ENCODE measurements at regions of chr6 and their contacts with region 1.

Region 1: DNA sequence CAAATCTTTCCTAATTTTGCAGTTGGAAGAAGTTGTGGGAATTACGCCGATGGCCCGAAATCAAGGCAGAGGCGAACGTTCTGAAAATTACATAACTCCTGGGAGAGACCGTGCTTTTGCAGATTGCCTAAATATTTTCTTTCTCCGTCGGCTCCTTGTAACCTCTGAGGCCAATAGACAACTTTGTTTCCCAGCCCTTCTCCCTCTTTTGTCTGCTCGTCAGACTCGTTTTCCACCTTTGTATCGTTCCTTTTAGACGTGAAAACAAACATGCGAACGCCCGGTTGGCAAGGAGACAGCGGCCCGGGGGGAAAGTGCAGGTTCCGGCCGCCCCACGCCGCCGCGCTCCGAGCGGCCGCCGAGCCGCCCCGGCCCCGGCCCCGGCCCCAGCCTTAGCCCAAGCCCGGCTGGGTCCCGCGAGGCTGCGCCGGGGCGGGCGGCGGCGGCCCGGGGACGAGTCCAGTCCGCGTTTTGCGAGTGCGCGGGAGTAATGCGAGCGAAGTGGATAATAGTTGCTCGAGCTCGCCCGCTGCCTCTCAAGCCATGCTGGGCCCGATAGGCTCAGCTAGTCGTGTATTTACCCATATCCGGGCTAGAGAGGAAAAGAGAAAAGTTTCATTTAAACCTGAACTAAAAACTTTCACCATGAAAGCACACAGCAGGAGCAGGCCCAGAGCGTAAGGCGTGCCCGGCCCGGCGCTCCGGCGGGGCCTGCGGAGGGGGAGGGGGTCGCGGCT is at the start of gene ARID1B:
- DNase-seq: peak; percentile 69 to 92 (median 76)
- ATAC-seq: peak; percentile 55
- H3K4me3 ChIP-seq: peak within 1 kb of the TSS; percentile 89
- H3K4me3 Mint-ChIP-seq: peak within 1 kb of the TSS; percentile 95
- H3K27ac ChIP-seq: peak within 1 kb of the TSS; percentile 83 to 90
- H3K27ac Mint-ChIP-seq: peak within 1 kb of the TSS; percentile 97
- H3K4me1 ChIP-seq: peaks cover 12% of the 10 kb centered on the region
- H3K4me1 Mint-ChIP-seq: peaks cover 46% of the 10 kb centered on the region
- H3K27me3 ChIP-seq: no peaks in the 10 kb centered on the region
- H3K27me3 Mint-ChIP-seq: no peaks in the 10 kb centered on the region
- CTCF ChIP-seq: no peak
- total RNA-seq, gene ARID1B: 120 to 125 TPM

Region 2: DNA sequence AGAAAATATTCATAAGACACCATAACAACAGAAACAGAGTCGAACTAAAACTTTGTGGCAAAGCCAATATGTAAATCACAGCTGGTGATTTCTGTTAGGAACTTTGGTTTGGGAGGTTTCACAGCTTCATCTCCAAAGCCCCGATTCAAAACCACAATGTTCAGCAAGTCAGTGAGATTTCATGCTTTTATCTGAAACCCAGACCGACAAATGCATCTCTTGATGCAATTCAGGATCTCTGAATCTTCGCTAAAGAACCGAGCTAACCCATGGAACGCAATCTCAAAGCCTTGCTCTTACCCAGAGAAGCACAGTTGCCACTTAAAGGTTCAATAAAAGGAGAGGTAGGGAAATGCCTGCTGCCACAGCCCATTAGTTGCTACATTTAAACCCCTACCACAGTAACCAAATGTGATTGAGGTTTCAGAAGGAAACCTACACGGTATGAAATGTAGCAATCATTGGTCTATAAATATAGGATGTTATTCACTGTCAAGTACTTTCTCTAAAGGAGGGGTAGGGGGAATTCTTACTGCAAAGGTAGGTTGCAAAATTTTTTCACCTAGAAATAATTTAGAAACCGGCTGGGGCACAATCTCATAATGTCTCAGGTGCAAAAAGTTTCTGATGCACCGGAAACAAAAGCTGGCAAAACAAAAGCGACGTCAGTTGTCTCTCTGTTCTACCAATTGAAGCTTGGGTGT is 380.8 kb before region 1 on chr6:
- CTCF ChIA-PET with region 1: no interaction called
- POLR2A ChIA-PET with region 1: interaction called, 52 read pairs
- intact Hi-C with region 1: loop called (anchors 2 to 10 kb)
- DNase-seq: peak in 11 of 14 experiments; percentile 1 to 80 (median 19)
- ATAC-seq: peak; percentile 72
- H3K4me3 ChIP-seq: peak overlapping the region; percentile 37
- H3K4me3 Mint-ChIP-seq: peak overlapping the region; percentile 78
- H3K27ac ChIP-seq: peak overlapping the region; percentile 78 to 91
- H3K27ac Mint-ChIP-seq: peak overlapping the region; percentile 97
- H3K4me1 ChIP-seq: peaks cover 54% of the 10 kb centered on the region
- H3K4me1 Mint-ChIP-seq: peaks cover 97% of the 10 kb centered on the region
- H3K27me3 ChIP-seq: no peaks in the 10 kb centered on the region
- H3K27me3 Mint-ChIP-seq: no peaks in the 10 kb centered on the region
- CTCF ChIP-seq: no peak

Region 3: DNA sequence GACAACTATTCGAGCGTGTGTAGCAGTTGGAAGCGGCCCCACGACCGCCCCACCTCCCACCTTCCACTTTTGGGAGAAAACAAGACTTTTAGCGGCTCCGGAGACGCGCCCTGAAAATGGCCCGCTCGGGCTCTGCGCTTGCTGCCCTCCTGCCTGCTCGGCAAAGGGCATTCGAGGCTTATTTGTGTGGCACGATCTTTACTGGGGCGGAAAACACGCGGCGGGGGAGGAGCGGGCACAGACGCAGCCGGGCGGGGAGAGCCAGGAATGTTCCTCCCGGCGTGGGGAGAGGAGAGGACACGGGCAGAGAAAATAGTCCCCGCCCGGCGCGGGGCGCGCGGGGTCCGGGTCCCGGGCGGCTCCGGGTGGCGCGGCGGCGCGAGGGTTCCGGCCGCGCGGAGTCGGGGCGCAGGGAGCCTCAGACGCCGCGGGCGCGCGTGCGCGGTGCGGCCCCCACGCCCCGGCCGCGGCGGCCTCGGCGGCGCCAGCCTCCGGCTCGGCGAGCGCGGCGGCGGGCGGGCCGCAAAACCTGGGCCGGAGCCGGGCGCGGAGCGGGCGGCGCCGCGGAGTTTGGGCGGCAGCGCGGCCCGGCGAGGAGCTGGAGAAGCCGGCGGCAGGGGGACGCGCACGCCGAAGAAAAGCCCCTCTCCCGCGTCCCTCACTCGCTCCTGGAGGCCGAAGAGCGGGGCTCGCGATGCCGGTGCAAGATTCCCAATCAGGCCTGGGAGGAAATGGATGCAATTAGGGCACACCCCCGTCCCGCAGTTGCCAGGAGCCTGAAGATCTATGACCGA is 89.8 kb before region 1 on chr6:
- CTCF ChIA-PET with region 1: interaction called, 6 read pairs
- POLR2A ChIA-PET with region 1: interaction called, 141 read pairs
- intact Hi-C with region 1: loop called (anchors 1 kb)
- DNase-seq: peak; percentile 53 to 94 (median 76)
- ATAC-seq: peak; percentile 76
- H3K4me3 ChIP-seq: peak overlapping the region; percentile 82
- H3K4me3 Mint-ChIP-seq: peak overlapping the region; percentile 92
- H3K27ac ChIP-seq: peak overlapping the region; percentile 91 to 97
- H3K27ac Mint-ChIP-seq: peak overlapping the region; percentile 92
- H3K4me1 ChIP-seq: peaks cover 14% of the 10 kb centered on the region
- H3K4me1 Mint-ChIP-seq: peaks cover 24% of the 10 kb centered on the region
- H3K27me3 ChIP-seq: no peaks in the 10 kb centered on the region
- H3K27me3 Mint-ChIP-seq: no peaks in the 10 kb centered on the region
- CTCF ChIP-seq: no peak

Region 4: GRCh38 chr6:156698239-156699016 is 78.6 kb before region 1 on chr6:
- CTCF ChIA-PET with region 1: no interaction called
- POLR2A ChIA-PET with region 1: no interaction called
- intact Hi-C with region 1: no loop called
- DNase-seq: no peak
- ATAC-seq: no peak
- H3K4me3 ChIP-seq: no peak overlapping the region
- H3K4me3 Mint-ChIP-seq: no peak overlapping the region
- H3K27ac ChIP-seq: no peak overlapping the region
- H3K27ac Mint-ChIP-seq: no peak overlapping the region
- H3K4me1 ChIP-seq: no peaks in the 10 kb centered on the region
- H3K4me1 Mint-ChIP-seq: no peaks in the 10 kb centered on the region
- H3K27me3 ChIP-seq: no peaks in the 10 kb centered on the region
- H3K27me3 Mint-ChIP-seq: no peaks in the 10 kb centered on the region
- CTCF ChIP-seq: no peak

Region 5: GRCh38 chr6:156729248-156729647 is 47.8 kb before region 1 on chr6:
- CTCF ChIA-PET with region 1: no interaction called
- POLR2A ChIA-PET with region 1: interaction called, 4 read pairs
- intact Hi-C with region 1: loop called in 1 of 2 experiments (anchors 5 kb)
- DNase-seq: no peak
- ATAC-seq: no peak
- H3K4me3 ChIP-seq: no peak overlapping the region
- H3K4me3 Mint-ChIP-seq: no peak overlapping the region
- H3K27ac ChIP-seq: no peak overlapping the region
- H3K27ac Mint-ChIP-seq: no peak overlapping the region
- H3K4me1 ChIP-seq: no peaks in the 10 kb centered on the region
- H3K4me1 Mint-ChIP-seq: no peaks in the 10 kb centered on the region
- H3K27me3 ChIP-seq: no peaks in the 10 kb centered on the region
- H3K27me3 Mint-ChIP-seq: no peaks in the 10 kb centered on the region
- CTCF ChIP-seq: no peak

Region 6: GRCh38 chr6:156816505-156816904 is 39.5 kb after region 1 on chr6:
- CTCF ChIA-PET with region 1: no interaction called
- POLR2A ChIA-PET with region 1: no interaction called
- intact Hi-C with region 1: loop called in 1 of 2 experiments (anchors 5 kb)
- DNase-seq: no peak
- ATAC-seq: no peak
- H3K4me3 ChIP-seq: no peak overlapping the region
- H3K4me3 Mint-ChIP-seq: peak overlapping the region; percentile 16
- H3K27ac ChIP-seq: no peak overlapping the region
- H3K27ac Mint-ChIP-seq: no peak overlapping the region
- H3K4me1 ChIP-seq: peaks cover 35% of the 10 kb centered on the region
- H3K4me1 Mint-ChIP-seq: peaks cover 88% of the 10 kb centered on the region
- H3K27me3 ChIP-seq: no peaks in the 10 kb centered on the region
- H3K27me3 Mint-ChIP-seq: no peaks in the 10 kb centered on the region
- CTCF ChIP-seq: no peak

Region 7: GRCh38 chr6:156953479-156954146 is 176.6 kb after region 1 on chr6:
- CTCF ChIA-PET with region 1: no interaction called
- POLR2A ChIA-PET with region 1: interaction called, 5 read pairs
- intact Hi-C with region 1: loop called in 1 of 2 experiments (anchors 2 kb)
- DNase-seq: peak in 10 of 14 experiments; percentile 13 to 89 (median 42)
- ATAC-seq: peak; percentile 99
- H3K4me3 ChIP-seq: no peak overlapping the region
- H3K4me3 Mint-ChIP-seq: no peak overlapping the region
- H3K27ac ChIP-seq: no peak overlapping the region
- H3K27ac Mint-ChIP-seq: peak overlapping the region; percentile 66
- H3K4me1 ChIP-seq: peaks cover 29% of the 10 kb centered on the region
- H3K4me1 Mint-ChIP-seq: peaks cover 85% of the 10 kb centered on the region
- H3K27me3 ChIP-seq: no peaks in the 10 kb centered on the region
- H3K27me3 Mint-ChIP-seq: no peaks in the 10 kb centered on the region
- CTCF ChIP-seq: peak; percentile 18

Region 8: DNA sequence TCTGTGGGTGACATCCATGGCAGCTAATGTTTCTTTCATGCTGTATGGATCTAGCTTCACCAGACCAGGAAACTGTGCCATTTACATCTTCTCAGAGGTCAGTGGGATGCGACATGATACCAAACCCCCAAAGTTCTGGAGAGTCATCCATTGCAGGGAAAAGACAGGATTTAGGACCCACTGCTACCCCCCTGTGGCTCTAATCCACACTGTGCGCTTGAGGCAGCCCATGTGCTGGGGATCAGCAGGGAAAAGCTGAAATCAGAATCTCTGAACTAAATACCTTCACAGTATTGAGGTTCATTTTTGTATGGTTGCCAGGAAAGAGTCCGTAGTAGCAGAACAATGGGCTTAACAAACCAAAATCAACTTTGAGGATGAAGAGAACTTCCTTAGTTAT is 381.9 kb after region 1 on chr6:
- CTCF ChIA-PET with region 1: no interaction called
- POLR2A ChIA-PET with region 1: no interaction called
- intact Hi-C with region 1: no loop called
- DNase-seq: no peak
- ATAC-seq: no peak
- H3K4me3 ChIP-seq: no peak overlapping the region
- H3K4me3 Mint-ChIP-seq: no peak overlapping the region
- H3K27ac ChIP-seq: no peak overlapping the region
- H3K27ac Mint-ChIP-seq: peak overlapping the region; percentile 37
- H3K4me1 ChIP-seq: no peaks in the 10 kb centered on the region
- H3K4me1 Mint-ChIP-seq: peaks cover 7% of the 10 kb centered on the region
- H3K27me3 ChIP-seq: no peaks in the 10 kb centered on the region
- H3K27me3 Mint-ChIP-seq: no peaks in the 10 kb centered on the region
- CTCF ChIP-seq: no peak

Measured in CD4-positive, alpha-beta T cell (primary cell).